Naive thymus-derived CD4-positive, alpha-beta T cell (primary cell): ENCODE measurements at regions of chr20 and their contacts with region 1.

Region 1: GRCh38 chr20:1734269-1734858 is 76.8 kb upstream of the SIRPG start:
- DNase-seq: peak in 6 of 9 donors; percentile 17 to 56 (median 46)
- ATAC-seq: peak; percentile 82
- H3K4me3 ChIP-seq: no peak overlapping the region
- H3K4me3 Mint-ChIP-seq: peak overlapping the region in 6 of 10 donors; percentile 23 to 57 (median 40)
- H3K27ac ChIP-seq: no peak overlapping the region
- H3K27ac Mint-ChIP-seq: peak overlapping the region in 6 of 9 donors; percentile 28 to 75 (median 62)
- H3K4me1 ChIP-seq: peaks cover 0 to 29% of the 10 kb centered on the region in 2 donors
- H3K4me1 Mint-ChIP-seq: peaks cover 0 to 36% (median 11%) of the 10 kb centered on the region in 7 donors
- H3K27me3 ChIP-seq: no peaks in the 10 kb centered on the region
- H3K27me3 Mint-ChIP-seq: peaks cover 0 to 9% (median 4%) of the 10 kb centered on the region in 5 donors

Region 2: GRCh38 chr20:1503564-1504227 is 230.7 kb before region 1 on chr20:
- CTCF ChIA-PET with region 1: interaction called, 40 read pairs
- POLR2A ChIA-PET with region 1: interaction called, 6 read pairs
- intact Hi-C with region 1: loop called in 1 of 2 experiments (anchors 1 kb)
- DNase-seq: peak; percentile 31 to 81 (median 78)
- ATAC-seq: peak; percentile 100
- H3K4me3 ChIP-seq: no peak overlapping the region
- H3K4me3 Mint-ChIP-seq: peak overlapping the region in 1 of 10 donors; percentile 51
- H3K27ac ChIP-seq: no peak overlapping the region
- H3K27ac Mint-ChIP-seq: peak overlapping the region in 4 of 9 donors; percentile 3 to 75 (median 20)
- H3K4me1 ChIP-seq: no peaks in the 10 kb centered on the region
- H3K4me1 Mint-ChIP-seq: peaks cover 3 to 8% (median 4%) of the 10 kb centered on the region in 7 donors
- H3K27me3 ChIP-seq: peaks cover 0 to 6% of the 10 kb centered on the region in 2 donors
- H3K27me3 Mint-ChIP-seq: peaks cover 9 to 61% (median 31%) of the 10 kb centered on the region in 5 donors

Region 3: DNA sequence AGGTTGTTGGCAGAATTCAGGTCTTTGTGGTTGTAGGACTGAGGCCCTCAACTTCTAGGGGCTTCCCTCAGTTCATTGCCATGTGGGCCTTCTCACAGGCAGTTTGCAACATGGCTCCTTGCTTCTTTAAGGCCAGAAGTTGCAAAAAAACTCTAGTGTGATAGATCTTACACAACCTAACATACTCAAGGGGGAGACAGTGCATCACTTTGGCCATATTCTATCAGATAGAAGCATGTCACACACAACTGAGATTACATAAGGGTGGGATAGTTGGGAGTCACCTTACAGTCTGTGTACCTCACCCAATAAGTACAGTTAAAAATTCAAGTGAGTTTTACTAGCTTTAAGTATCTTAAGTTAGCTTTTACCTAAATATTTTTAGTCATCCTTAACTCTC is 178.4 kb before region 1 on chr20:
- CTCF ChIA-PET with region 1: interaction called, 43 read pairs
- POLR2A ChIA-PET with region 1: interaction called, 3 read pairs
- intact Hi-C with region 1: loop called (anchors 1 to 5 kb)
- DNase-seq: peak in 6 of 9 donors; percentile 10 to 41 (median 26)
- ATAC-seq: peak; percentile 34
- H3K4me3 ChIP-seq: no peak overlapping the region
- H3K4me3 Mint-ChIP-seq: no peak overlapping the region
- H3K27ac ChIP-seq: no peak overlapping the region
- H3K27ac Mint-ChIP-seq: peak overlapping the region in 2 of 9 donors; percentile 13 to 49
- H3K4me1 ChIP-seq: no peaks in the 10 kb centered on the region
- H3K4me1 Mint-ChIP-seq: peaks cover 0 to 14% (median 7%) of the 10 kb centered on the region in 7 donors
- H3K27me3 ChIP-seq: no peaks in the 10 kb centered on the region
- H3K27me3 Mint-ChIP-seq: no peaks in the 10 kb centered on the region

Region 4: GRCh38 chr20:1622450-1622849 is 111.9 kb before region 1 on chr20:
- CTCF ChIA-PET with region 1: interaction called, 14 read pairs
- POLR2A ChIA-PET with region 1: interaction called, 3 read pairs
- intact Hi-C with region 1: loop called in 1 of 2 experiments (anchors 1 kb)
- DNase-seq: peak in 5 of 9 donors; percentile 15 to 49 (median 42)
- ATAC-seq: peak; percentile 53
- H3K4me3 ChIP-seq: no peak overlapping the region
- H3K4me3 Mint-ChIP-seq: peak overlapping the region; percentile 7 to 70 (median 51)
- H3K27ac ChIP-seq: peak overlapping the region; percentile 31
- H3K27ac Mint-ChIP-seq: peak overlapping the region in 8 of 9 donors; percentile 68 to 91 (median 84)
- H3K4me1 ChIP-seq: peaks cover 31 to 52% of the 10 kb centered on the region in 2 donors
- H3K4me1 Mint-ChIP-seq: peaks cover 57 to 95% (median 89%) of the 10 kb centered on the region in 7 donors
- H3K27me3 ChIP-seq: no peaks in the 10 kb centered on the region
- H3K27me3 Mint-ChIP-seq: no peaks in the 10 kb centered on the region

Region 5: DNA sequence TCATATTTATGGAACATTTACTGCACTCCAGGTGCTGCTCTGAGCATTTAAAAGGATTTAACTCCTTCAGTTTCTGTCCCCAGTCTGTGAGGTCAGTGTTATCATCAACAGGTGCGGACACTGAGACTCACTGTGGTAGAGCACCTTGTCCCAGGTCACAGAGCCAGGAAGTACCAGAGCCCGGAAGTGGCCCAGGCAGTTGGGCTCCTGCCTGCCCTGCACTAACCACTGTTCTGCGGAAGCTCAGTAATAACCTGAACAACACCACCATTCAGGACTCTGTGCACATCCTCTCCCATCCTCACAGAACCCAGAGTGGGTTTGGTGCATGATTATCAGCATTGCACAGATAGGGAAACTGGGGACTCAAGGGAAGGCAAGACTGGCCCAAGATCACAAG is 60.0 kb before region 1 on chr20:
- CTCF ChIA-PET with region 1: interaction called, 12 read pairs
- POLR2A ChIA-PET with region 1: interaction called, 9 read pairs
- intact Hi-C with region 1: no loop called
- DNase-seq: peak in 5 of 9 donors; percentile 34 to 55 (median 36)
- ATAC-seq: peak; percentile 76
- H3K4me3 ChIP-seq: peak overlapping the region; percentile 28
- H3K4me3 Mint-ChIP-seq: peak overlapping the region; percentile 55 to 87 (median 78)
- H3K27ac ChIP-seq: peak overlapping the region; percentile 68
- H3K27ac Mint-ChIP-seq: peak overlapping the region; percentile 80 to 97 (median 92)
- H3K4me1 ChIP-seq: peaks cover 67 to 84% of the 10 kb centered on the region in 2 donors
- H3K4me1 Mint-ChIP-seq: peaks cover 58 to 100% (median 98%) of the 10 kb centered on the region in 7 donors
- H3K27me3 ChIP-seq: no peaks in the 10 kb centered on the region
- H3K27me3 Mint-ChIP-seq: no peaks in the 10 kb centered on the region

Region 6: DNA sequence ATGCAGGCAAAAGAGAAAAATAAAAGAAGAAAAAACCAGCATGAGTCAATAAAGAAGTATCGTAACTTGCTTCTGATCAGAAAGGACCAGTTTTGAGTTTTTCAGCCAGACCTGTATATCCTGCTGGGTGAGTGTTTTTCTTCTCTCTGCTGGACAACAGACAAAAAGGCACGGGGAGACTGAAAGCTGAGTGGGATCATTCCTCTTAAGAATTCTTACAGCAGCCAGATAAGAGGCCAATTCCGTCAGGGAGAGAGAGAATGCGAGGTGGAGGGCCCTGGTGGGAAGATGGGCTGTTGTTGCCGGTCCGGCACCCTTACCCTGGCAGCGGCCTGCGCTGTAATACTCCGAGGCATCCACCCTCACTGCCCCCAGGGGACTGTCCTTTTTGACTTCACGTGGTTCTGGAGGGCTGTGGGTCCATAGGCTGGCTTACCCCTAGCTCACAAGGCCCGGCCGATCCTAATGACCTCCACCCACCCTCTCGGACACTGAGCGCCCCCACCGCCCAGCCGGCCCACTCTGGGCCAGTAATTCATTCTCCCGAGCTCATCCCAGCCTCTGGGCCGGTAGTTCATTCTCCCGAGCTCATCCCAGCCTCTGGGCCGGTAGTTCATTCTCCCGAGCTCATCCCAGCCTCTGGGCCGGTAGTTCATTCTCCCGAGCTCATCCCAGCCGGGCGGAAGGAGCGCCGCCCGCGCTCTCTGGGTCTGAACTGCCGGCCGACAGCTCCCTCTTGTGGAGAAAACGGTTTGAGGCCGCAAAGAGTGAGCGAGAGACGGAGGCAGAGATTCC is 42.5 kb after region 1 on chr20:
- CTCF ChIA-PET with region 1: interaction called, 18 read pairs
- POLR2A ChIA-PET with region 1: interaction called, 3 read pairs
- intact Hi-C with region 1: loop called in 1 of 2 experiments (anchors 2 kb)
- DNase-seq: peak; percentile 58 to 86 (median 74)
- ATAC-seq: peak; percentile 95
- H3K4me3 ChIP-seq: peak overlapping the region; percentile 77
- H3K4me3 Mint-ChIP-seq: peak overlapping the region; percentile 68 to 94 (median 85)
- H3K27ac ChIP-seq: peak overlapping the region; percentile 50
- H3K27ac Mint-ChIP-seq: peak overlapping the region in 5 of 9 donors; percentile 9 to 66 (median 62)
- H3K4me1 ChIP-seq: no peaks in the 10 kb centered on the region
- H3K4me1 Mint-ChIP-seq: peaks cover 12 to 17% (median 16%) of the 10 kb centered on the region in 7 donors
- H3K27me3 ChIP-seq: no peaks in the 10 kb centered on the region
- H3K27me3 Mint-ChIP-seq: peaks cover 7 to 11% (median 8%) of the 10 kb centered on the region in 5 donors

Region 7: GRCh38 chr20:3632311-3633004 is 1898.1 kb after region 1 on chr20:
- CTCF ChIA-PET with region 1: no interaction called
- POLR2A ChIA-PET with region 1: no interaction called
- intact Hi-C with region 1: no loop called
- DNase-seq: no peak
- ATAC-seq: no peak
- H3K4me3 ChIP-seq: no peak overlapping the region
- H3K4me3 Mint-ChIP-seq: no peak overlapping the region
- H3K27ac ChIP-seq: no peak overlapping the region
- H3K27ac Mint-ChIP-seq: peak overlapping the region in 1 of 9 donors; percentile 64
- H3K4me1 ChIP-seq: no peaks in the 10 kb centered on the region
- H3K4me1 Mint-ChIP-seq: peaks cover 0 to 5% (median 0%) of the 10 kb centered on the region in 7 donors
- H3K27me3 ChIP-seq: no peaks in the 10 kb centered on the region
- H3K27me3 Mint-ChIP-seq: no peaks in the 10 kb centered on the region